ENCODE measurements at regions of chr17 and their contacts with region 1.

Region 1: DNA sequence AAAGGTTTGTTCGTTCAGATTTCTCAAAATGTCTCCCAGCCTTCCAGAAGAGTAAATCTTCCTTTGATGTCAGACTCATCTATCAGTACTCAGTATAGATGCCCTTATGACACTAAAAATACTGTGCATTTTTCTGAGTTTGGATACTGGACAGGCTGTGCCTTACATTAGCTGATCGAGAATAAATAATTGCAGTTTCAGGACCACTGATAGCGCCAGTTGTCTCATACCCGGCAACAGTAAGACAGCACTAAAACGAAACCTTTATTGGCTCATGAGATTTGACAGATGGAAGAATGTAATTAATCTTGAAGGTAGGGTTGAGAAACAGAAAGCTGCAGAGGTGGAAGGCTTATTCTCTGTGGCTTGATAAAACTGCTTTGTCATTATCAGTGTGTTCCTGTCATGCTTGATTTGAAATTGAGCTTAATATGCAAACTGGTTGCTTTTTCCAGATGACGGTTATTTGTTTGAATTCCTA is 1.2 kb downstream of the ATP6V0A1 start:
- DNase-seq: no peak
- H3K4me3 ChIP-seq: no peak overlapping the region
- CTCF ChIP-seq: no peak
- POLR2A ChIP-seq: no peak

Region 2: DNA sequence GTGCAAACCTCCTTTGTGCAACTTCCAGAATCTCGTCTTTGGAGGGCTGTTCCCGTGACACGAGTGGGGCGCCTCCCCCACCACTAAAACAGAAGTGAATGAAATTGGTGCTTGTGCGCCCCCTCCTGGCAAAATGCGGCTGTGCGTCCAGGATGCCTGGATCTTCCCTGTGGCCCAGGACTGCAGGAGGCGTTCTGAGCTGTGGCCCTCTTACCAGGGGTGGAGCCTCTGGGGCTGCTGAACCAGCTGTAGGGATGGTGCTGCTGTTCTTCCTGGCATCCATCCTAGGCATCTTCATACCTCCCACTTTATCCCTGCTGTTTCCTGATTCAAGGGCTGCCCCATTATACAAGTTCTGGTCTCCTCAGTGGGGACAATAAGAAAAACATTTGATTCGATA is 57.7 kb after region 1 on chr17:
- intact Hi-C with region 1: loop called (anchors 10 kb)
- DNase-seq: peak; percentile 88 to 98
- H3K4me3 ChIP-seq: no peak overlapping the region
- CTCF ChIP-seq: peak in 1 of 3 donors; percentile 95
- POLR2A ChIP-seq: no peak

Measured in lower leg skin (tissue), 4 donors.